HepG2 (cell line): ENCODE measurements at regions of chr5 and their contacts with region 1.

Region 1: GRCh38 chr5:139385061-139386049 is 2.3 kb upstream of the SLC23A1 start:
- DNase-seq: peak; percentile 73
- ATAC-seq: peak; percentile 73
- H3K4me3 ChIP-seq: peak overlapping the region; percentile 68 to 79 (median 76)
- H3K27ac ChIP-seq: peak overlapping the region; percentile 69
- H3K4me1 ChIP-seq: peaks cover 81% of the 10 kb centered on the region
- H3K27me3 ChIP-seq: no peaks in the 10 kb centered on the region; a peak in 1 of 5 replicates
- CTCF ChIP-seq: peak; percentile 93
- EP300 ChIP-seq: no peak
- POLR2A ChIP-seq: peak; percentile 30 to 68; a peak in 3 of 4 replicates
- RAD21 ChIP-seq: peak; percentile 64

Region 2: GRCh38 chr5:139341650-139342422 is 43.5 kb before region 1 on chr5 and contains the start of gene PAIP2:
- CTCF ChIA-PET with region 1: no interaction called
- POLR2A ChIA-PET with region 1: interaction called, 12 read pairs
- in situ Hi-C with region 1: no loop called
- intact Hi-C with region 1: no loop called
- DNase-seq: peak; percentile 94
- ATAC-seq: peak; percentile 85
- H3K4me3 ChIP-seq: peak within 1 kb of the TSS; percentile 74 to 98 (median 84)
- H3K27ac ChIP-seq: peak within 1 kb of the TSS; percentile 99
- H3K4me1 ChIP-seq: peaks cover 43% of the 10 kb centered on the region
- H3K27me3 ChIP-seq: no peaks in the 10 kb centered on the region; a peak in 1 of 5 replicates
- CTCF ChIP-seq: peak; percentile 96
- EP300 ChIP-seq: peak; percentile 39 to 49; a peak in 2 of 4 replicates
- POLR2A ChIP-seq: peak; percentile 83 to 95
- RAD21 ChIP-seq: peak; percentile 65
- total RNA-seq, gene PAIP2: 61.5 and 104 TPM in 2 replicates

Region 3: GRCh38 chr5:139403787-139404483 is 18.6 kb after region 1 on chr5 and contains the start of gene SPATA24:
- CTCF ChIA-PET with region 1: interaction called, 6 read pairs
- POLR2A ChIA-PET with region 1: interaction called, 6 read pairs
- in situ Hi-C with region 1: no loop called
- intact Hi-C with region 1: loop called (anchors 2 kb)
- DNase-seq: peak; percentile 89
- ATAC-seq: peak; percentile 94
- H3K4me3 ChIP-seq: peak within 1 kb of the TSS; percentile 59 to 77 (median 60)
- H3K27ac ChIP-seq: peak within 1 kb of the TSS; percentile 78
- H3K4me1 ChIP-seq: peaks cover 52% of the 10 kb centered on the region
- H3K27me3 ChIP-seq: no peaks in the 10 kb centered on the region
- CTCF ChIP-seq: peak; percentile 18; the same call in 1 of the 2 replicates
- EP300 ChIP-seq: peak in 1 of 2 experiments; percentile 30; a peak in 1 of 4 replicates
- POLR2A ChIP-seq: peak; percentile 56 to 65
- RAD21 ChIP-seq: no peak
- total RNA-seq, gene SPATA24: 11.1 and 13.0 TPM in 2 replicates

Region 4: DNA sequence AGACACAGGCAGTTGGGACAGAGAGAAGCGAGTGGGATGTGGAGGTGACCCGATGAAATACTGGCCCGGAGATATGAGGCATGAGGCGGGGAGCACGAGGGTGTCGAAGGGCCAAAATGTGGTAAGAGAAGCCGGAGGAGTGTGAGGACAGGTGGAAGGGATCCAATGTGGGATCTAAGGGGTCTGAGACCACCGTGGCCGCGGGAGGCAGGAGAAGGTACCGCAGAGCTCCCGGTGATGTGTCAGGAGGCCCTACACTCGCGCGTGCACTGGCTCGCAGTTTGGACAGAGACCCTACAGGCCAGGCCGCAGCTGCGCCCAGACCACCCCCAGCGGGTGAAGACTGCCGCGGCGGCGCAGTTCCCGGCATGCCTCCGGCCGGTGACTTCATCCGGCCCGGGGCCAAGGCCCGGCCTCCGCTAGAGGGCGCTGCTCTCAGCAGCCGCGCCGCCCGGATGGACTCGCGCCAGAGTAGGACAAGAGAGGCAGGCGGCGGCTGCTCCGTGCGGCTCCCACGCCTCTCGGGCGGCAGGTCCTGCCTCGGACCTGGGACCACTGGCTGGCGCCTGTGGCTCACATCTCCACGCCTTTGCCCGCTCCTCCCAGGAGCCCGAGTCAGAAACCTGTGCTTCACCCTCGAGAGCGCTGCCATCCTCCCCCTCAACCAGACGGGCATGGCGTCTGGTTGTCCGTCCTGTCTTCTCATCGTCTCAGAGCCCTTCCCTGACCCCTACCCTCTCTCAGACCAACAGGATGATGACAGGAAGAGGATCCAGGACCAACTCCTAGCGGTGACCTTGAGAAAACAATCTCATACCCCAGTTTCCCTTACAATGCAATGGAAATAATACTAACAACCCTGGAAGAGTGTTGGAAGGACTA is 132.6 kb after region 1 on chr5:
- CTCF ChIA-PET with region 1: interaction called, 4 read pairs
- POLR2A ChIA-PET with region 1: no interaction called
- in situ Hi-C with region 1: no loop called
- intact Hi-C with region 1: loop called (anchors 1 kb)
- DNase-seq: peak; percentile 80
- ATAC-seq: peak; percentile 91
- H3K4me3 ChIP-seq: peak overlapping the region; percentile 54 to 77 (median 59)
- H3K27ac ChIP-seq: peak overlapping the region; percentile 71
- H3K4me1 ChIP-seq: peaks cover 54% of the 10 kb centered on the region
- H3K27me3 ChIP-seq: no peaks in the 10 kb centered on the region; a peak in 1 of 5 replicates
- CTCF ChIP-seq: peak; percentile 96
- EP300 ChIP-seq: no peak
- POLR2A ChIP-seq: peak; percentile 83 to 89
- RAD21 ChIP-seq: peak; percentile 92